IMR-90 (cell line): ENCODE measurements at regions of chr20 and their contacts with region 1.

Region 1: GRCh38 chr20:45283548-45284057 is 23.0 kb upstream of the RBPJL start:
- DNase-seq: no peak
- ATAC-seq: no peak
- H3K4me3 ChIP-seq: no peak overlapping the region
- H3K27ac ChIP-seq: no peak overlapping the region
- H3K4me1 ChIP-seq: no peaks in the 10 kb centered on the region
- H3K27me3 ChIP-seq: peaks cover 31% of the 10 kb centered on the region
- CTCF ChIP-seq: no peak
- POLR2A ChIP-seq: no peak
- RAD21 ChIP-seq: no peak

Region 2: GRCh38 chr20:45011108-45011526 is 272.5 kb before region 1 on chr20:
- CTCF ChIA-PET with region 1: no interaction called
- POLR2A ChIA-PET with region 1: no interaction called
- dilution Hi-C with region 1: no loop called
- in situ Hi-C with region 1: loop called (anchors 10 kb)
- intact Hi-C with region 1: no loop called
- DNase-seq: peak; percentile 80
- ATAC-seq: peak; percentile 74
- H3K4me3 ChIP-seq: no peak overlapping the region
- H3K27ac ChIP-seq: no peak overlapping the region
- H3K4me1 ChIP-seq: peaks cover 15% of the 10 kb centered on the region
- H3K27me3 ChIP-seq: no peaks in the 10 kb centered on the region
- CTCF ChIP-seq: peak; percentile 75
- POLR2A ChIP-seq: no peak
- RAD21 ChIP-seq: peak; percentile 81

Region 3: GRCh38 chr20:45128071-45128470 is 155.5 kb before region 1 on chr20:
- CTCF ChIA-PET with region 1: no interaction called
- POLR2A ChIA-PET with region 1: no interaction called
- dilution Hi-C with region 1: no loop called
- in situ Hi-C with region 1: loop called (anchors 25 kb)
- intact Hi-C with region 1: loop called (anchors 10 kb)
- DNase-seq: no peak
- ATAC-seq: no peak
- H3K4me3 ChIP-seq: no peak overlapping the region
- H3K27ac ChIP-seq: no peak overlapping the region
- H3K4me1 ChIP-seq: no peaks in the 10 kb centered on the region
- H3K27me3 ChIP-seq: peaks cover 13% of the 10 kb centered on the region
- CTCF ChIP-seq: no peak
- POLR2A ChIP-seq: no peak
- RAD21 ChIP-seq: no peak

Region 4: DNA sequence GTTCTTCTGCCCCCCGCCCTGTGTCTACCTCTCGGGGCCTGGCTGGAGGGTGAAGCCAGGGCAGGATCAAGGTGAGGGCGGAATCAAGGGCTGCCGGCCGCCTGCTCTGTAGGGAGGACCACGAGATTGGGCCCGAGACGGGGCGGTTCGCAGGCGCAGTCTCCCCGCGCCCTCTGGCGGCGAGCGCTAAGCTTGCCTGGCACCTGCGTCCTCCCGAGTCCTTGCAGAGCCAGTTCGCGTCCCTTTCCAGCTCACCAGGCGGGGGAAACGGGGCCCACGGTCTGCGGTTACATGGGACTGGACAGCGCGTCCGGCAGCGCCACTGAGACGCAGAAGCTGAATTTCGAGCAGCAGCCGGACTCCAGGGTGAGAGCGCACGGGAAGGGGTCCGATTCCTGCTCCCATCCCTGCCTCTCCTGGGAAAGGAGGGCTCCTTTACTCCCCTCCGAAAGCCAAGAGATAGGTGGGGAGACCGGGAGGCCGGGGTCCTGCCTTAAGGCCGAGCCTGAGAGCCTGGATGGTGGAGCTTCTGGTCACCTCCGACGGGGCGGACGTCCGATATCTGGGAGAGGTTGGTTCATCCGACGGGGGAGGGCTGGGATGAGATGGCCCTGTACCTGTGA is 28.1 kb after region 1 on chr20:
- CTCF ChIA-PET with region 1: no interaction called
- POLR2A ChIA-PET with region 1: no interaction called
- dilution Hi-C with region 1: no loop called
- in situ Hi-C with region 1: no loop called
- intact Hi-C with region 1: no loop called
- DNase-seq: peak; percentile 42
- ATAC-seq: peak; percentile 88
- H3K4me3 ChIP-seq: no peak overlapping the region
- H3K27ac ChIP-seq: no peak overlapping the region
- H3K4me1 ChIP-seq: no peaks in the 10 kb centered on the region
- H3K27me3 ChIP-seq: peaks cover 38% of the 10 kb centered on the region
- CTCF ChIP-seq: peak; percentile 67
- POLR2A ChIP-seq: no peak
- RAD21 ChIP-seq: peak; percentile 51